Activated CD8-positive, alpha-beta memory T cell treated with anti-CD3 and anti-CD28 coated beads, Interleukin-2, amount 10 ng/mL, durations not matched to agents 7 days and 5 days (primary cell): ENCODE measurements at regions of chr7 and their contacts with region 1.

Region 1: GRCh38 chr7:106153891-106154449 is 41.9 kb upstream of the SYPL1 start:
- DNase-seq: peak; percentile 78
- ATAC-seq: peak; percentile 96
- H3K4me3 Mint-ChIP-seq: no peak overlapping the region
- H3K27ac Mint-ChIP-seq: no peak overlapping the region
- H3K4me1 Mint-ChIP-seq: peaks cover 6% of the 10 kb centered on the region
- H3K27me3 Mint-ChIP-seq: peaks cover 43% of the 10 kb centered on the region

Region 2: DNA sequence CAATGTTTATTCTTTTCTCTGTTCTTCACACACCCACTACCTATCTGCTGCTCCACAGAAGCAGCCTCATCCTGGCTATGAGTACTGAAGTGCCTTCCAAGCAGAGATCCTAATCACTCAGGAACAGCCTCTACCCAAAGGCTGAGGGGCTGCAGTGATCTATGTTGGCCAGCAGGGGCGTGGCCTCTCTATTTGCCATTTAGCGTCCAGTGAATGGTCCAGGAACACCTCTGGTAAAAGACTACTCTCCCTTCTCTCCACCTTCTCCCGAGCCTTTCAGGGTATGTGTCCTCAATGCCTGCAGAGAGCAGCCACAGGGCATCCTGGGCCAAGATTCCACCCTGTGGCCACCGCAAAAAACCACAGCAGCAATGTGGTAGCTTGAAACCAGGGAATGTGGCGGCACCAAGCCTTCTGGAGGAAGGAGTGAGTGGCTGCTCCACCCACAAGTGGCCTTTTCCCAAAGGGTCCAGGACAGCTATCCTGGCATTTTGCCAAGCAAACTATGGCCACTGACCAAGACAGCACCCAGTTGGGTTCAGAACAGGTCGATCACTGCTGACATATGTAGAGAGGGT is 112.7 kb before region 1 on chr7:
- CTCF ChIA-PET with region 1: interaction called, 17 read pairs
- DNase-seq: peak; percentile 42
- ATAC-seq: peak; percentile 29
- H3K4me3 Mint-ChIP-seq: no peak overlapping the region
- H3K27ac Mint-ChIP-seq: no peak overlapping the region
- H3K4me1 Mint-ChIP-seq: no peaks in the 10 kb centered on the region
- H3K27me3 Mint-ChIP-seq: peaks cover 34% of the 10 kb centered on the region

Region 3: GRCh38 chr7:106071356-106071998 is 82.5 kb before region 1 on chr7:
- CTCF ChIA-PET with region 1: interaction called, 17 read pairs
- DNase-seq: peak; percentile 66
- ATAC-seq: peak; percentile 98
- H3K4me3 Mint-ChIP-seq: peak overlapping the region; percentile 68
- H3K27ac Mint-ChIP-seq: peak overlapping the region; percentile 94
- H3K4me1 Mint-ChIP-seq: peaks cover 42% of the 10 kb centered on the region
- H3K27me3 Mint-ChIP-seq: no peaks in the 10 kb centered on the region

Region 4: GRCh38 chr7:106126170-106126938 is 27.6 kb before region 1 on chr7:
- CTCF ChIA-PET with region 1: interaction called, 10 read pairs
- DNase-seq: no peak
- ATAC-seq: no peak
- H3K4me3 Mint-ChIP-seq: peak overlapping the region; percentile 31
- H3K27ac Mint-ChIP-seq: no peak overlapping the region
- H3K4me1 Mint-ChIP-seq: peaks cover 12% of the 10 kb centered on the region
- H3K27me3 Mint-ChIP-seq: peaks cover 23% of the 10 kb centered on the region

Region 5: DNA sequence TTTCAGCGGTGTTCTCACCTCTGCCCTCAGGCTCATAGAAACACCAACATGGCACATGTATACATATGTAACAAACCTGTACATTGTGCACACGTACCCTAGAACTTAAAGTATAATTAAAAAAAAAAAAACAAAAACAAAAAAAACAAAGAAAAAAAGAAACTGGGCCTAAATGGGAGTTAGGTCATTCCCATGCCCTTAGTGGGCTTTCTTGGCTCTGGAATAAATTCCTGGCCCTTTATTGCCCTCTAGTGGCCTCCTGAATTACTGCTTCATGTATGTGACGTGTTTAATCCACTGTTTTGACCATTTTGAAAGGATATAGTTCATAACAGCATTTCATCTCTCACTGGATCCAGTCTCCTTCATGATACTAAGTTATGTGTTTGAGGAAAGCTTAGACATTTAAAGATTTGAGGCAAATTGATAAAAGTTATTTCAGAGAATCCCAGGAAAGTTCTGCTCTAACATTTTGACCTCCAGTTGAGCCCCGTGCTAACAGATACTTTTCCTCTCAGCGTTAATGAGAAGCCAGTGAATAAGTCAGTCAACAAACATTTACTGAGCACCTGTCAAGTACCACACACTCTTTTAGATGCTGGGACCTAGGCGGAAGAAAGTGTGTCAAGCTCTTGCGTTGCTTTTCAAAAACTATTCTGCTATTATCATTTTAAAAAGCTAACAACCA is 12.8 kb after region 1 on chr7:
- CTCF ChIA-PET with region 1: interaction called, 58 read pairs
- DNase-seq: peak; percentile 57
- ATAC-seq: peak; percentile 39
- H3K4me3 Mint-ChIP-seq: no peak overlapping the region
- H3K27ac Mint-ChIP-seq: no peak overlapping the region
- H3K4me1 Mint-ChIP-seq: no peaks in the 10 kb centered on the region
- H3K27me3 Mint-ChIP-seq: peaks cover 21% of the 10 kb centered on the region

Region 6: GRCh38 chr7:106216517-106216922 is 62.5 kb after region 1 on chr7:
- CTCF ChIA-PET with region 1: no interaction called
- DNase-seq: no peak
- ATAC-seq: no peak
- H3K4me3 Mint-ChIP-seq: no peak overlapping the region
- H3K27ac Mint-ChIP-seq: no peak overlapping the region
- H3K4me1 Mint-ChIP-seq: peaks cover 8% of the 10 kb centered on the region
- H3K27me3 Mint-ChIP-seq: peaks cover 49% of the 10 kb centered on the region